Calu3 (cell line): ENCODE measurements at regions of chr3 and their contacts with region 1.

Region 1: GRCh38 chr3:76570436-76571057 is 469.4 kb upstream of the ROBO2 start:
- DNase-seq: no peak
- H3K4me3 Mint-ChIP-seq: no peak overlapping the region
- H3K27ac Mint-ChIP-seq: no peak overlapping the region
- H3K4me1 Mint-ChIP-seq: no peaks in the 10 kb centered on the region
- H3K27me3 Mint-ChIP-seq: no peaks in the 10 kb centered on the region
- CTCF ChIP-seq: no peak

Region 2: GRCh38 chr3:76369178-76369577 is 201.4 kb before region 1 on chr3:
- CTCF ChIA-PET with region 1: no interaction called
- intact Hi-C with region 1: loop called (anchors 10 kb)
- DNase-seq: no peak
- H3K4me3 Mint-ChIP-seq: no peak overlapping the region
- H3K27ac Mint-ChIP-seq: no peak overlapping the region
- H3K4me1 Mint-ChIP-seq: no peaks in the 10 kb centered on the region
- H3K27me3 Mint-ChIP-seq: no peaks in the 10 kb centered on the region
- CTCF ChIP-seq: no peak